ENCODE measurements at regions of chr1 and their contacts with region 1.

Region 1: DNA sequence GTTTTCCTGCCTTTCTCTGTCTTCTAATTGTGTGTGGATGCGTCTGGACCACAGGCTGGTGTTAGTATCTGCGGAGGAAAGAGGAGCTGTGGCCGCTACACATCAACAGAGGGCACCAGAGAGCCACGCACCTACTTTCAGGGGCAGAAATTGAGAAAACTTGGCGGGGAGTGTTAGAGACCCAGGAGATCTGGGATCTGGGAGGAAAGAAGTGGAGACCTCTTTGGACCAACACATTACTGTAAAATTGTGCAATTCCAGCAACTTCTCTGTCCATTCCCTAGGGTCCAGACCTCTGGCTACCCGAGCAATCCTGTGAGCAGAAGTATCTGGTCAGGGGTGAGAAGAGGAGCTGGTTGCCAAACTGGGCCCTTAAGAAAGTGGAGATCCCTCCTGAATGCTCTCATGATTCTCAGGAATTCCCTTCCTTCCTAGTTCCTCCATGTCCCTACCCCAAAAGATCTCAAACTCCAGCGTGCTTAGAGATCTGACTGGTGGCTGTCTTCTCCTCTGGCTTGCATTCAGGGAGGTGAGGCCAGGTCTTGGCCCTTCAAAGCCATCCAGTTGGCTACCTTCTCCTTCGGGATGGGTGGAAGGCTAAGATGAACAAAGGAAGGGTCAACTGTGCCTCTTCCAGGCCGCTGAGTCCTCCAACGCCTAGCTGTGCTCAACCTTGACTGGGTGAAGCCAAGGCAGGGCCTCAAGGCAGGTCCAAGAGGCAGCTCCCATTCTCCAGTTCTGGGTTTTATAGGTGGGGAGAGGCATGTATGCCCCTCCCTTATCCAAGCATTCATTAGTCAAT is 1.2 kb upstream of the KIRREL1 start:
- DNase-seq: peak; percentile 69
- ATAC-seq: peak; percentile 54 to 76
- H3K4me3 ChIP-seq: peak overlapping the region; percentile 98; the same call in 1 of the 3 replicates
- H3K27ac ChIP-seq: peak overlapping the region; percentile 97 to 98
- H3K4me1 ChIP-seq: peaks cover 35% of the 10 kb centered on the region
- CTCF ChIP-seq: peak; percentile 97
- EP300 ChIP-seq: no peak
- POLR2A ChIP-seq: no peak
- RAD21 ChIP-seq: peak; percentile 98 to 100

Region 2: DNA sequence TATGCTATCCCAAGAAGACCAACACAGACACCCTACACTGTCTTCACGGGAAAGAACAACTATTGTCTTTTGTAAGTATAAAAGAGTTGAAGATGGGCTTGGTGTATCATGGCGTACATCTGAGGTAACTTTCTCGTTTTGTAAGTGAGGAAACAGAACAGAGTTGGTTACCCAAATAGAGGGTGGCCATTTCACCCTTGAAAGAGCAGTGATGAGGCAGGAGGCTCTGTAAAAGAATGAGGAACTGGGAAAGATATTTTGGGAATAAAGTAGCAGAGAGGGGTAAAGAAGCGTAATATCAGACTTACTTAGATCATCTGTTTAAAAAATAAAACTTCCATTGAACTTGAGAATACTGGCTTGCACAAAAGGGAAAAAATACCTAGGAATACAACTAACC is 234.2 kb before region 1 on chr1:
- CTCF ChIA-PET with region 1: no interaction called
- POLR2A ChIA-PET with region 1: no interaction called
- DNase-seq: no peak
- ATAC-seq: no peak
- H3K4me3 ChIP-seq: no peak overlapping the region
- H3K27ac ChIP-seq: no peak overlapping the region
- H3K4me1 ChIP-seq: no peaks in the 10 kb centered on the region
- CTCF ChIP-seq: no peak
- EP300 ChIP-seq: no peak
- POLR2A ChIP-seq: no peak
- RAD21 ChIP-seq: no peak

Region 3: GRCh38 chr1:157951230-157951629 is 41.0 kb before region 1 on chr1:
- CTCF ChIA-PET with region 1: no interaction called
- POLR2A ChIA-PET with region 1: no interaction called
- DNase-seq: no peak
- ATAC-seq: no peak
- H3K4me3 ChIP-seq: no peak overlapping the region
- H3K27ac ChIP-seq: no peak overlapping the region
- H3K4me1 ChIP-seq: no peaks in the 10 kb centered on the region
- CTCF ChIP-seq: no peak
- EP300 ChIP-seq: no peak
- POLR2A ChIP-seq: no peak
- RAD21 ChIP-seq: no peak

Region 4: GRCh38 chr1:157963713-157964112 is 28.5 kb before region 1 on chr1:
- CTCF ChIA-PET with region 1: interaction called, 139 read pairs
- POLR2A ChIA-PET with region 1: interaction called, 6 read pairs
- DNase-seq: peak; percentile 61 to 68
- ATAC-seq: peak; percentile 67 to 87
- H3K4me3 ChIP-seq: no peak overlapping the region
- H3K27ac ChIP-seq: peak overlapping the region in 1 of 2 experiments; percentile 40; a peak in 2 of 6 replicates
- H3K4me1 ChIP-seq: peaks cover 46% of the 10 kb centered on the region
- CTCF ChIP-seq: peak; percentile 96
- EP300 ChIP-seq: no peak
- POLR2A ChIP-seq: no peak
- RAD21 ChIP-seq: peak; percentile 97 to 98

Region 5: GRCh38 chr1:157978586-157979403 is 13.4 kb before region 1 on chr1:
- CTCF ChIA-PET with region 1: interaction called, 139 read pairs
- POLR2A ChIA-PET with region 1: no interaction called
- DNase-seq: no peak
- ATAC-seq: no peak
- H3K4me3 ChIP-seq: no peak overlapping the region
- H3K27ac ChIP-seq: no peak overlapping the region
- H3K4me1 ChIP-seq: no peaks in the 10 kb centered on the region
- CTCF ChIP-seq: no peak
- EP300 ChIP-seq: no peak
- POLR2A ChIP-seq: no peak
- RAD21 ChIP-seq: no peak

Region 6: DNA sequence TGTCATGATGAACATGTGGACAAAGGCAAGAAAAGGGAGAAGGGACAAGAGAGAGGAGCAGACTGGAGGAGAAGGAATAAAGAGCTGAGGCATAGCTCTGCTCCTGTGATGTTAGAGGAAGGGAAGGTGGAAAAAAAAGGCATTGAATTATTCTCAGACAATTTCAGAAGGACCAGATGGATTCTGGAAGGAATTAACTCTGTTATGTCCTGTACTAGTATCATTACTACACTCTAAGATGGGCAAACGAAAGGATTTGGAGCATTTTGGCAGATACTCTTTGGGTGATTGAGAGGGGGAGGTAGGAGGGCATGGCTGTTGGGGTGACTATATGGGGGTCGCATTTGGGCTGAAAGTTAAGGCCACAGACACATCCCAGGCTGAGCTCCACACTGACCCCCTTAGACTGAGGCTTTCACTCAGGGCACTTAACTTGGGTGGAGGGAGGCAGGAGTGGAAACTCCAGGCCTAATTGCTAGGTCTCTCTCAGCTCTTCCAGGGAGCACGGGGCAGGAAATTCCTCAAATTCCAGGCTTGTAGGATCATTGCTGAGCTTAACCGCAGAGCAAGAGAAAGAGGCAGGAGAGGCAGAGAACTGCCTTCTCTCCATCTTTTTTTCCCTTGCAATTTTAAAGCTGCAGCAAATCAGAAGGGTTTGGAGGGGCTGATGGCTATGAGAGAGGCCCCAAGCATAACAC is 27.1 kb after region 1 on chr1:
- CTCF ChIA-PET with region 1: interaction called, 1,281 read pairs
- POLR2A ChIA-PET with region 1: interaction called, 22 read pairs
- DNase-seq: peak; percentile 76 to 87
- ATAC-seq: peak; percentile 94
- H3K4me3 ChIP-seq: no peak overlapping the region
- H3K27ac ChIP-seq: peak overlapping the region; percentile 89 to 98
- H3K4me1 ChIP-seq: peaks cover 88% of the 10 kb centered on the region
- CTCF ChIP-seq: no peak; the same call in 2 of the 3 replicates
- EP300 ChIP-seq: peak in 1 of 2 experiments; percentile 44; a peak in 1 of 5 replicates
- POLR2A ChIP-seq: no peak
- RAD21 ChIP-seq: peak; percentile 33 to 43; a peak in 3 of 5 replicates

Region 7: DNA sequence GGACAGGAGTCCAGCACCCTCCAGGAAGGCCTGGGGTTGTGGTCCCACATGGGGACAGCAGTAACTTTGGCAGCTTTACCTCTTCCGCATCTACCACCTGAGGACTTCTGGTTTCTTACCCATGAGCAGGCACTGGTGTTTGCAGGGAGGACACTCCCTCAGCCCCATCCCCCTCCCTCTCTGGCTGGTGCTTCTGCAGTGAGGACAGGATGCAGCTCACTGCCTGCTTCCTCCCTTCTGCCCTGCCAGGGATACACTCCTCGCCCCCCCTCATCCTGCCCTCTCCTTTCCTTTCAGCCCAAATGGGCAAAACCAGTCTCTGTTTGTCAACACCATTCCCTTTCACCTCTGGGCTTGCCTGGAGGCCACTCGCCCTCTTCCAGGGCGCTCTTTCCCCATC is 63.6 kb after region 1 on chr1:
- CTCF ChIA-PET with region 1: interaction called, 1,281 read pairs
- POLR2A ChIA-PET with region 1: no interaction called
- DNase-seq: no peak
- ATAC-seq: peak in 1 of 2 experiments; percentile 22; a peak in 1 of 6 replicates
- H3K4me3 ChIP-seq: no peak overlapping the region
- H3K27ac ChIP-seq: no peak overlapping the region
- H3K4me1 ChIP-seq: peaks cover 19% of the 10 kb centered on the region
- CTCF ChIP-seq: no peak
- EP300 ChIP-seq: no peak
- POLR2A ChIP-seq: no peak
- RAD21 ChIP-seq: no peak

Region 8: GRCh38 chr1:158075078-158075477 is 82.8 kb after region 1 on chr1:
- CTCF ChIA-PET with region 1: interaction called, 44 read pairs
- POLR2A ChIA-PET with region 1: no interaction called
- DNase-seq: no peak
- ATAC-seq: no peak
- H3K4me3 ChIP-seq: no peak overlapping the region
- H3K27ac ChIP-seq: no peak overlapping the region
- H3K4me1 ChIP-seq: no peaks in the 10 kb centered on the region
- CTCF ChIP-seq: no peak
- EP300 ChIP-seq: no peak
- POLR2A ChIP-seq: no peak
- RAD21 ChIP-seq: no peak

Region 9: GRCh38 chr1:158155673-158156072 is 163.4 kb after region 1 on chr1:
- CTCF ChIA-PET with region 1: no interaction called
- POLR2A ChIA-PET with region 1: no interaction called
- DNase-seq: no peak
- ATAC-seq: no peak
- H3K4me3 ChIP-seq: no peak overlapping the region
- H3K27ac ChIP-seq: no peak overlapping the region
- H3K4me1 ChIP-seq: no peaks in the 10 kb centered on the region
- CTCF ChIP-seq: no peak
- EP300 ChIP-seq: no peak
- POLR2A ChIP-seq: no peak
- RAD21 ChIP-seq: no peak